SK-N-SH (cell line): ENCODE measurements at regions of chr11 and their contacts with region 1.

Region 1: GRCh38 chr11:20355221-20356219 is 8.0 kb upstream of the HTATIP2 start:
- DNase-seq: peak; percentile 56
- H3K4me3 ChIP-seq: no peak overlapping the region; a peak in 1 of 4 replicates
- H3K27ac ChIP-seq: no peak overlapping the region
- H3K4me1 ChIP-seq: no peaks in the 10 kb centered on the region; a peak in 1 of 4 replicates
- H3K27me3 ChIP-seq: no peaks in the 10 kb centered on the region
- CTCF ChIP-seq: peak; percentile 72
- EP300 ChIP-seq: no peak
- RAD21 ChIP-seq: peak; percentile 60

Region 2: DNA sequence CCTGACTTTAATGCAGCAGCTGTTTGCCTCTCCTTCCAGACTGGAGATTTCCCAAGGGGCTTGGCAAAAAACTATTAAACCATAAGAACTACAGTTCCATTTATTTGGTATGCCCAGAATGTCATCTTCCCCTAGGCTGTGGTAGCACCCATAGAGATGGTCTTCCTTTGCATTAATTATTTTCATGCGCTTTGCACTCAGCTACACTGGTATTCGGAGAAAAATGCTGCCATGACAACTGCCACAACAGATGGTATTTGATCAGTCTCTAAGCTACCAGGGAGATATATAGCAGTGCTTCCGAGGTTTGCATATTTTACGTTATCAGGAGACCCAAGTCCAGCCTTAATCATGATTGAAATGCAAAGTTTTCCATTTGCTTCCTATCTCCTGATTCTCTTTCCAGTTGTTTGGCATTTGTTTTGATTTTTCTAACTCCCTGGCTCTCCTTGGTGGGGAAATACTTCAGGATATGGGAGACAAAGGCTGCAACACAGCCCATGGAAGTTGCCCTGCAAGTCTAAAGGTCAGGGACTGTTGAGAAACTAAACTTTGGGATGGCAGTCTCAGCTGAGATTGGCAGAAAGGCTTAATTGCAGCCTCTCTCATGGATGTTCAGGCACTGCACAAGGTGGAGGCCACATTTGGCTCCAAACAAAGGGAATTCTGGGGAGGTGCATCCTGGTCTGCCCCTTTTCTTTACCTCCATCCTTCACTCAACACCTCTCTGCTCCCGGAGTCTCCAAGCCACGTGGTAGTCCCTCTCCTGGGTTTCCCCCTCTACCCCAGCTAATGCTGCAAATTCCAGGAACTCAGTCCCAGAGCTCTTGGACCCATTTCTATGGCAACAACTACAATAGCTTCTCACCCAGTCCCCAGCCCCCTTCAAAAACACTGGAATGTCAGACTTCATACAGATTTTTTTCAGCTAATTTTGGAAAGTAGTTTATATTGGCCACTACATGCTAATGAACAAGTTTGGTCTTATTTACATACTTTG is 491.1 kb before region 1 on chr11:
- CTCF ChIA-PET with region 1: no interaction called
- POLR2A ChIA-PET with region 1: no interaction called
- DNase-seq: no peak
- H3K4me3 ChIP-seq: no peak overlapping the region
- H3K27ac ChIP-seq: peak overlapping the region; percentile 19 to 28
- H3K4me1 ChIP-seq: peaks cover 5 to 37% of the 10 kb centered on the region in 2 experiments
- H3K27me3 ChIP-seq: no peaks in the 10 kb centered on the region
- CTCF ChIP-seq: no peak
- EP300 ChIP-seq: no peak
- RAD21 ChIP-seq: no peak

Region 3: GRCh38 chr11:20045098-20045688 is 310.3 kb before region 1 on chr11:
- CTCF ChIA-PET with region 1: no interaction called
- POLR2A ChIA-PET with region 1: no interaction called
- DNase-seq: peak; percentile 68
- H3K4me3 ChIP-seq: no peak overlapping the region; a peak in 1 of 4 replicates
- H3K27ac ChIP-seq: peak overlapping the region in 1 of 2 experiments; percentile 83; a peak in 2 of 4 replicates
- H3K4me1 ChIP-seq: peaks cover 12 to 43% of the 10 kb centered on the region in 2 experiments; a peak in 3 of 4 replicates
- H3K27me3 ChIP-seq: no peaks in the 10 kb centered on the region
- CTCF ChIP-seq: no peak
- EP300 ChIP-seq: peak in 1 of 2 experiments; percentile 72; a peak in 2 of 4 replicates
- RAD21 ChIP-seq: no peak

Region 4: GRCh38 chr11:20110908-20111669 is 244.4 kb before region 1 on chr11:
- CTCF ChIA-PET with region 1: interaction called, 10 read pairs
- POLR2A ChIA-PET with region 1: no interaction called
- DNase-seq: peak; percentile 78
- H3K4me3 ChIP-seq: peak overlapping the region in 1 of 2 experiments; percentile 10; a peak in 1 of 4 replicates
- H3K27ac ChIP-seq: peak overlapping the region; percentile 95 to 97
- H3K4me1 ChIP-seq: peaks cover 25 to 49% of the 10 kb centered on the region in 2 experiments
- H3K27me3 ChIP-seq: no peaks in the 10 kb centered on the region
- CTCF ChIP-seq: peak; percentile 96
- EP300 ChIP-seq: peak in 1 of 2 experiments; percentile 98; a peak in 3 of 4 replicates
- RAD21 ChIP-seq: peak; percentile 68

Region 5: GRCh38 chr11:20154381-20154780 is 201.1 kb before region 1 on chr11:
- CTCF ChIA-PET with region 1: interaction called, 13 read pairs
- POLR2A ChIA-PET with region 1: no interaction called
- DNase-seq: no peak
- H3K4me3 ChIP-seq: no peak overlapping the region
- H3K27ac ChIP-seq: peak overlapping the region in 1 of 2 experiments; percentile 17; a peak in 1 of 4 replicates
- H3K4me1 ChIP-seq: no peaks in the 10 kb centered on the region
- H3K27me3 ChIP-seq: peaks cover 6% of the 10 kb centered on the region; the same call in 1 of the 2 replicates
- CTCF ChIP-seq: no peak; the same call in 1 of the 2 replicates
- EP300 ChIP-seq: no peak
- RAD21 ChIP-seq: no peak

Region 6: DNA sequence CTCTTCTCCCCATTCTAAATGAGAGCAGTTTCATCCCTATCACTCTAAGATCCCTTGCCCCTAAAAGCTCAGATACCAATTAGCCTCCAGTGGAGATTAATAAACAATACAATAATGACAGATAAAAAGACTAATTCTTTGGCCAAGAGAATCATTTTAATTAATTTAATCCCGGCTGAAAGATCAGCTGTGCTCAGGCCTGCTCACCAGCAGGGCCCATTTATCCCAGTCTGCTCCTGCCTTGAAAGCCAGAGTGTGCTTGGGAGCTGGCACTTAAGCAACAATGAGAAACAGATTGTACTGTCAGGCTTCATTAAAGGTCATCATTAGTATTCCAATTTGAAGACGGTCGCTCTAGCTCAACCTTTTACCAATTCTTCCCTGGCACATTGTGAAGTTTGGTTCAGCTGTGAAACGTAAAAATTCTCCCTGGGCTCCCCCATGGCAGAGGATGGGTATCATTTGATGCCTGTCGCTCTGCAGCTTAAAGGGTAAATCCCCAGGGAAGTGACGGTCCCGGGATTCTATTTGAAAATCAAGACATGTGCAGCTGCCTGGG is 28.1 kb before region 1 on chr11:
- CTCF ChIA-PET with region 1: interaction called, 13 read pairs
- POLR2A ChIA-PET with region 1: no interaction called
- DNase-seq: peak; percentile 60
- H3K4me3 ChIP-seq: no peak overlapping the region
- H3K27ac ChIP-seq: peak overlapping the region in 1 of 2 experiments; percentile 28; a peak in 2 of 4 replicates
- H3K4me1 ChIP-seq: peaks cover 0 to 8% of the 10 kb centered on the region in 2 experiments; a peak in 2 of 4 replicates
- H3K27me3 ChIP-seq: no peaks in the 10 kb centered on the region
- CTCF ChIP-seq: no peak
- EP300 ChIP-seq: peak in 1 of 2 experiments; percentile 89; a peak in 2 of 4 replicates
- RAD21 ChIP-seq: no peak

Region 7: GRCh38 chr11:20467487-20468185 is 112.1 kb after region 1 on chr11:
- CTCF ChIA-PET with region 1: no interaction called
- POLR2A ChIA-PET with region 1: no interaction called
- DNase-seq: no peak
- H3K4me3 ChIP-seq: no peak overlapping the region
- H3K27ac ChIP-seq: no peak overlapping the region
- H3K4me1 ChIP-seq: no peaks in the 10 kb centered on the region; a peak in 1 of 4 replicates
- H3K27me3 ChIP-seq: no peaks in the 10 kb centered on the region
- CTCF ChIP-seq: no peak
- EP300 ChIP-seq: no peak
- RAD21 ChIP-seq: no peak